Heart right ventricle (tissue), 16 donors: ENCODE measurements at regions of chr3 and their contacts with region 1.

Region 1: DNA sequence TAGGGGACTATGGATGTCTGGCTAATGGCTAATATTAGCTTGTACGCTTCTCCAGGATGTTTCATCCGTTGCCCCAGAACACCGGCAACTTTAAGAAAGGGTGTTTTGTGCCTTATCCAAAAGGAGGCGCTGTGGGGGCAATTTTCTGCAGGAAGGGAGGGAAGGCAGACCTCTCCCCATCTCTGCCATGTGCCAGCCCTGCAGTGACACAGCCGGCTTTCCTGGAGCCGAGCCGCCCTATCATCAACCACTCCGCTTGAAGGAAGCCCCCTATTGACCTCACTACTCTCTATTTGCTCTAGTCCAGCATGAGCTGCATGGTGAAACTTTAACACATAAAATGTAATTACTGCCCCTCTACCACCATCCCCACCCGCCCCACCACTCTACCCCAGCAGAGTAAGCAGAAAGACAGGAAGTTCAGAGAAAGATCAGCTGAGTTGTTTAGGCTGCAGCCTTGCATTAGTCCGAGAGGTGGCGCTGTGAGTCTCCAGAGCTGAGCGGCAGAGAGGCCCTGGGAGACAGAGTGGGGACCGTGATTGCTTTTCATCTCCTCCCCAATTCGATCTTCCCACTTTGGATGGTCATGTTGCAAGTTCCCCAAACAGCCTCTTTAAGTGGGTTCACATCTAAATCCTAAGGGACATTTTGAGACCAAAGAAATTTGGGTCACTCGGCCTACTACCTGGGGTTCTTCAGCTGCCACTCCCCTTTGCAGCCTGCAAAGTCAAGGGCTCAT is 24.5 kb upstream of the RAD18 start:
- DNase-seq: peak; percentile 60 to 65
- ATAC-seq: peak; percentile 67 to 84 (median 72)
- H3K4me3 ChIP-seq: no peak overlapping the region
- H3K27ac ChIP-seq: no peak overlapping the region
- H3K4me1 ChIP-seq: peaks cover 0 to 22% (median 8%) of the 10 kb centered on the region in 9 donors
- H3K27me3 ChIP-seq: no peaks in the 10 kb centered on the region
- CTCF ChIP-seq: peak; percentile 62 to 81 (median 80)

Region 2: DNA sequence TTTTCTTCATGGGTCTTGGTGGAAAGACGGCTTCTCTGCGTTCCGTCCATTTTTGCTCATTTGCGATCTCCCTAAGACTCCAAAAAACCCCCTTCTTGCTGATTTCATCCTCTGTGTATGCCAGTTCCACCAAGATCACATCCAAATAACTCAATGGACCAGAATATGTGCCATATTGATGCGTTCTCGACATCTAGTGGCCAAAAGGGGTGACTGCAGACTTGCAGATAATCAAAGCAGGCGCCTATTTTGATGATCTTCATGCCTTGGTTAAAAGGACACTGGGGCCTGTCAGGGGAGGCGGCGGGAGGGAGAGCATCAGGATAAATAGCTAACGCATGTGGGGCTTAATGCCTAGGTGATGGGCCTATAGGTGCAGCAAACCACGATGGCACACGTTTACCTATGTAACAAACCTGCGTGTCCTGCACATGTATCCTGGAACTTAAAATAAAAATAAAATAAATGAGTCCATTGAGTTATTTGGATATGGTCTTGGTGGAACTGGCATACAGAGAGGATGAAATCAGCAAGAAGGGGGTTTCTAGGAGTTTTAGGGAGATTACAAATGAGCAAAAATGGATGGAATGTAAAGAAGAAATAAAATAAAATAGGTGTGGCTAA is 79.7 kb after region 1 on chr3:
- intact Hi-C with region 1: loop called (anchors 1 to 5 kb)
- DNase-seq: peak in 1 of 2 donors; percentile 58
- ATAC-seq: peak; percentile 56 to 85 (median 73)
- H3K4me3 ChIP-seq: no peak overlapping the region
- H3K27ac ChIP-seq: peak overlapping the region in 6 of 10 donors; percentile 1 to 71 (median 22)
- H3K4me1 ChIP-seq: peaks cover 0 to 40% (median 20%) of the 10 kb centered on the region in 9 donors
- H3K27me3 ChIP-seq: no peaks in the 10 kb centered on the region
- CTCF ChIP-seq: peak; percentile 88 to 97 (median 92)

Region 3: GRCh38 chr3:9078561-9079240 is 90.9 kb after region 1 on chr3:
- intact Hi-C with region 1: loop called in 1 of 10 experiments (anchors 5 kb)
- DNase-seq: no peak
- ATAC-seq: no peak
- H3K4me3 ChIP-seq: no peak overlapping the region
- H3K27ac ChIP-seq: no peak overlapping the region
- H3K4me1 ChIP-seq: peaks cover 0 to 9% (median 0%) of the 10 kb centered on the region in 9 donors
- H3K27me3 ChIP-seq: no peaks in the 10 kb centered on the region
- CTCF ChIP-seq: no peak